ENCODE measurements at regions of chrX and their contacts with region 1.

Region 1: DNA sequence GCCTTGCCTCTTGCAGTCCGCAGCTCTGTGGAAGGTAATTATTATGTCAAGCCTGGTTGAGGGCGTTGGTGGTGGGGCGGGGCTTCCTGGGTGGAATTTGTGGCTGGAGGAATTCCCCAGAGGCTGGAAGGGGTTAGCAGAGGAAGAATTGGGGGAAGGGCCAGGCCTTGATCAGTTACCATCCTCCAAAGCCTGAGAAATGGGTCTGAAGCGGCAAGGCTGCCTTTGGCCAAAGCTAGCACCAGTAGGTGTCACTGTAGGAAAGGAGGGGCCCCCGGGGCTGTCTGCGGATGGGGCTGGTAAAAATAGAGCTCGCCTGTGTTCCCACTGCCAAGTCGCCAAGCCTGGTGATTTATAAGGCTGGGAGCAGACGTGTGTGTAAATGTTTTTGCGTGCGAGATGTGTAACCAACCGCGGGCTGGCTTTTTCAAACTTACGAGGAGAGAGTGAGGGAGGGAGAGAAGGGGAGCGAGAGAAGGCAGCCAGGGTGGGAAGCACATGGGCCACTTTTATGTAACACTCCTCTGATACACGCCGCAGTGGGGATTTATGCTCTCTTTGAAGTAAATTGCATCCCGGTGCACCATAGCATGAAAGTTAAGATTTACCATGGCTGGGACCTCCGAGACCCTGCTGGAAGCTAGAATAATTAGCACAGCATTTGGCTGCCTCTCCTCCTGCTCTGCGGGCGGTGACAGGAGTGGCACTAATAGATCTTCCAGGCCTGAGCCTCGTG is 366.9 kb downstream of the BCOR start:
- DNase-seq: peak; percentile 64 to 78 (median 77)
- ATAC-seq: peak; percentile 69 to 90 (median 82)
- H3K4me3 ChIP-seq: no peak overlapping the region
- H3K27ac ChIP-seq: peak overlapping the region in 5 of 12 donors; percentile 34 to 48 (median 38)
- H3K4me1 ChIP-seq: peaks cover 0 to 29% (median 10%) of the 10 kb centered on the region in 12 donors
- H3K27me3 ChIP-seq: peaks cover 0 to 35% (median 0%) of the 10 kb centered on the region in 9 donors
- CTCF ChIP-seq: peak; percentile 36 to 71 (median 58)
- POLR2A ChIP-seq: no peak

Region 2: DNA sequence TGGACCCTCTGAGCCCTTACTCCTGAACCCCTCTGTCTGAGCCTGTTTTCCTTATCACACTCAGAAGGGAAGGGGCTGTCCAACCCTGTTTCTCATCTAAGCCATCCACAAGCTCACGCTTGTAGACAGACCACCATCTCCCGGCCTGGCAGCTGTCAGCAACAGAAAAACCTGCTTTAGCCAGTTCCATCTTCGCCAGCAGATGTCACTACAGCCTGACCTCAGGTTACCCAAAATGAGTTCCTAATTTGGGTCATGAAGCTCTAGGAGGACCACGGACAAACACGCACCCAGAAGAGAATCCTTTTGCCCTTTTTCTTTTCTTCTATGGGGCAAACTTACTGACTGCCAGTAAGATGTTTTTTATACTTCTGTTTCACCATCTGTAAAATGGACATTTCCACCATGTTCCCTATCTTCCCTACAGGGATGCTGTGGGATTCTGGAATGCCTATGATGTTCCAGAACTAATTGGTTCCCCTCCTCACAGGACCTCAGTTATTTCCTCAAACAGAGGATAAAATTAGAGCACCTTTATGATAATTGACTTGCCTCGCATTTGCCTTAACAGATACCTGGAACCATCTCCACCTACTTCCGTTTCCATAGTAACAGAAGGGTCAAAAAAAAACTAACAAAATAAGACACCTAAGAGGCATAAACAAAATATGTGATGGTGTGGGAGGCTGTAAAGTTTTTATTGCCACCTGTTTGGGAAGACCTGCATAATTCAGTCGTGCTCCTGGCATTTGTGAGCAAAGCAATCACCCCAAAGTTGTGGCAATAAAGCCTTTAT is 78.3 kb before region 1 on chrX:
- intact Hi-C with region 1: loop called in 1 of 10 experiments (anchors 10 kb)
- DNase-seq: peak in 1 of 5 donors; percentile 22
- ATAC-seq: no peak
- H3K4me3 ChIP-seq: no peak overlapping the region
- H3K27ac ChIP-seq: no peak overlapping the region
- H3K4me1 ChIP-seq: no peaks in the 10 kb centered on the region
- H3K27me3 ChIP-seq: peaks cover 0 to 37% (median 0%) of the 10 kb centered on the region in 9 donors
- CTCF ChIP-seq: peak in 11 of 12 donors; percentile 23 to 56 (median 38)
- POLR2A ChIP-seq: no peak

Region 3: GRCh38 chrX:40083120-40083978 is 352.5 kb after region 1 on chrX:
- intact Hi-C with region 1: loop called in 1 of 10 experiments (anchors 10 kb)
- DNase-seq: no peak
- ATAC-seq: peak in 3 of 4 donors; percentile 34 to 59 (median 37)
- H3K4me3 ChIP-seq: peak overlapping the region in 10 of 12 donors; percentile 34 to 56 (median 45)
- H3K27ac ChIP-seq: no peak overlapping the region
- H3K4me1 ChIP-seq: peaks cover 0 to 47% (median 22%) of the 10 kb centered on the region in 12 donors
- H3K27me3 ChIP-seq: peaks cover 0 to 60% (median 0%) of the 10 kb centered on the region in 9 donors
- CTCF ChIP-seq: no peak
- POLR2A ChIP-seq: no peak

Region 4: GRCh38 chrX:40153335-40154249 is 422.8 kb after region 1 on chrX:
- intact Hi-C with region 1: loop called in 5 of 10 experiments (anchors 5 to 10 kb)
- DNase-seq: peak in 4 of 5 donors; percentile 37 to 70 (median 62)
- ATAC-seq: peak in 3 of 4 donors; percentile 3 to 22 (median 21)
- H3K4me3 ChIP-seq: peak overlapping the region; percentile 21 to 63 (median 50)
- H3K27ac ChIP-seq: peak overlapping the region; percentile 65 to 89 (median 81)
- H3K4me1 ChIP-seq: peaks cover 0 to 78% (median 29%) of the 10 kb centered on the region in 12 donors
- H3K27me3 ChIP-seq: peaks cover 0 to 96% (median 0%) of the 10 kb centered on the region in 9 donors
- CTCF ChIP-seq: peak in 6 of 12 donors; percentile 9 to 37 (median 27)
- POLR2A ChIP-seq: no peak

Region 5: DNA sequence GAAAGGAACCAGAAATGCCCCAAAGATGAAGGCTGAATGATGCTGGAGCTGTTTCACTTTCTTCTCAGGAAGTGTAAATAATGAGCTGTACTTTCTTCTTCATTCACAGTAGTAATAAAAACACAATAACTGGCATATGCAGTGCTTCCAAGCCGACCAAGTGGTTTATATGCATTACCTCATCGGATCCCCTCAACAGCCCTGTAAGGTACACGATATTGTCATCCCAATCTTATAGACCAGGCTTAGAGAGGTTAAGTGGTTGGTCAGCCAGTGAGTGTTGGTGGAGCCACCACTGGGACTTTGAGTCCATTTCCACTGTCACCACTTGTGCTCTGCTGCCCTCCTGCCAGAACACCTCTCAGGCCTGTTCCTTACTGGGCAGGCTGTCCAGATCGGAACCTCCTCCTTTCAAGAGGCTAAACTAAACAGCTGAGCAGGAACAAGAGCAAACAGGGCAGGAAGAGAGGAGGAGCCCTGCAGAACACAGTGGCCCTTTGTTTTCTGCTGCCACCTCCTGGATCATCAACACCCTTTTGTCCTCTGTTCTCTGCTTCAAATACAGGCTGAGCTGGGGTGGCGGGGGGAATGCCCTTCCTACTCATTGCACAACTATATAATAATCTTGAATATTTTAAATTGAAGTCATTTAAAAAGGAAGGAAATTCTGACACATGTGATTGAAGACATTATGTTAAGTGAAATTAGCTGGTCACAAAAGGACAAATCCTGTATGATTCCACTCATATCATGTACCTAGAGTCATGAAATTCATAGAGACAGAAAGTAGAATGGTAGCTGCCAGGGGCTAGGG is 737.4 kb after region 1 on chrX:
- intact Hi-C with region 1: loop called in 1 of 10 experiments (anchors 10 kb)
- DNase-seq: peak; percentile 37 to 53 (median 51)
- ATAC-seq: peak; percentile 89 to 94 (median 91)
- H3K4me3 ChIP-seq: no peak overlapping the region
- H3K27ac ChIP-seq: peak overlapping the region in 4 of 12 donors; percentile 9 to 30 (median 19)
- H3K4me1 ChIP-seq: peaks cover 0 to 21% (median 3%) of the 10 kb centered on the region in 12 donors
- H3K27me3 ChIP-seq: peaks cover 0 to 23% (median 0%) of the 10 kb centered on the region in 9 donors
- CTCF ChIP-seq: peak in 10 of 12 donors; percentile 7 to 49 (median 38)
- POLR2A ChIP-seq: no peak

Measured in heart left ventricle (tissue), 16 donors.